ENCODE measurements at regions of chr7 and their contacts with region 1.

Region 1: DNA sequence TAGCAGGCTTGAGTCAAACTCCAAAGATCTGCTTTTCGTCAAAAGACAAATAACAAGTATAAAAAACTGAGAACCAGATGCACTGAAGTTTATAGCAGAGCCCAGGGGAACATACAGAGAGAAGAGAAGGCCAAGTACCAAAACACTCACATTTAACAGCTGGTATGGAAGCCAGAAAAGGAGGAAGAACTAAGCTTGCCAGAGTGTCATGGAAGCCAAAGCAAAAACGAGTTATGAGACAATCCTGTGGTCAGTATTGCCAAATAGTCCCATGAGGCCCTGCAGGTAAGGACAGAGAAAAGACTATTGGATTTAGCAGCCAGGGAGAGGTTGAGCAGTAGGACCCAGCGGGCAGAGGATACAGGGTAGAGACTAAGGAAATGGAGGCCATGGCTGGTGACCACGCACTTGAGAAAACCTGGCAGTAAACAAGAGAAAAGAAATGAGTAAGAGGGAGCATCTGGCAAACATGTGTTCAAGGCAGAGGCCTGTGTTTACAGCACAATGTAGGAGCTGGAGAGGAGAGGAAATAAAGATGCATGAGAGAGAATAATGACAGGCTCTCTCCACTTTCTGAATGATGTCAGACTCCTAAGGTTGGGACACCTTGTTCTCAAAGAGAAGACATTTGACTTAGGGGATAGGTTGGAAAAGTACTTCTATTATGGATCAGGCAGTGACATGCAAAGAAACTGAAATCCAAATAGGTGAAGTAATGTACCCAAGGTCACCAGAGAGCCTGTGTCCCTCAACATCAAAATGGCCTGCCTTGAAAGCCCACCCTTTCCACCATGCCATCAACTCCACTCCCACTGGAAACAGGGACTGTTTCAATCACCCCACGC is 9.1 kb downstream of the CREB3L2 start:
- DNase-seq: peak; percentile 58
- H3K4me3 ChIP-seq: no peak overlapping the region
- H3K27ac ChIP-seq: peak overlapping the region; percentile 80 to 99 (median 94)
- H3K4me1 ChIP-seq: peaks cover 30 to 87% (median 56%) of the 10 kb centered on the region in 4 donors
- H3K27me3 ChIP-seq: no peaks in the 10 kb centered on the region
- CTCF ChIP-seq: no peak
- EP300 ChIP-seq: peak; percentile 51
- POLR2A ChIP-seq: no peak

Region 2: GRCh38 chr7:137934941-137935883 is 57.6 kb before region 1 on chr7:
- in situ Hi-C with region 1: loop called in 1 of 4 experiments (anchors 10 kb)
- intact Hi-C with region 1: no loop called
- DNase-seq: no peak
- H3K4me3 ChIP-seq: peak overlapping the region in 3 of 4 donors; percentile 8 to 29 (median 8)
- H3K27ac ChIP-seq: peak overlapping the region; percentile 67 to 76 (median 74)
- H3K4me1 ChIP-seq: peaks cover 30 to 66% (median 56%) of the 10 kb centered on the region in 4 donors
- H3K27me3 ChIP-seq: no peaks in the 10 kb centered on the region
- CTCF ChIP-seq: no peak
- EP300 ChIP-seq: no peak
- POLR2A ChIP-seq: no peak

Region 3: DNA sequence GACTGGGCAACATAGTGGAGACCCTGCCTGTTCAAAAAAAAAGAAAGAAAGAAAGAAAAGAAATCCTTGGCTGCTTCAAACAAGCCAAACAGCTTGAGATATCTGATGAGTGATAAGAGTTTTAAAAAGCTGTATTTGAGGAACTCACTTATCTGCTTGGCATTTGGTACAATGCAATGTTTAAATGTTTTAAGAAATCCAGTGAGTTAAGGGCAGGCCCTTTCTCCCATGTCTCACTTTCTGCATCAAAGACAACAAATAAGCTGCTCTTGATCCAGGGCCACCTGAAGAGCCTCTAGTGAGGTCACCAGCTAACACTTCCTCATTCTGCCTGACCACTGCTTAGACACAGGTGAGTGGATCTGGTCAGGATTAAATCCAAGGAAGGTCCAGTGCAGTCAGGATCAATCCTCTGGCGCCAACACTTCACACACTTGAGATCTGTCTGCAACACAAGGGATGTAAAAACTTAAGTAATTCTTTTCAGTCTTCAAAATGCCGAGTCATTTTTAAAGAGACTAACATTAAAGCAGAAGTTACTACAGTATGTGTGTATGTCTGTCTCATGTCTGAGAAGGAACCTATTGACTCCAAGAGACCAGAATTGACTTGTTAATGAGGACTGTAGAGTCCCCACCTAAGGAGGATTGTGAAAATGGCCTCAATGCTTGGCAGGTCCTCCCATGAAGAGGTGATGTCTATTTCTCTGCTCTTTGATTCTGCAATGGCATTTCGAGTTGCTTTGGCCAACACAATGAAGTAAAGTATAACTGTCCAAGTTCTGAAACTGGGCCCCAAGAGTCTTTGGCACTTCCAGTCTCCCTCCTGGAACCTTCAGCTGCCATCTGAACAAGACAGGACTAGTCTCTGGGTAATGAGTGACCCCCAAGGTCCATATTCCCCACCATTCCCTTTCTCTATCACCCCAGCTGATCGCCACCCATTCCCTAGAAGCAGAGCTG is 34.0 kb before region 1 on chr7:
- in situ Hi-C with region 1: no loop called
- intact Hi-C with region 1: loop called (anchors 5 kb)
- DNase-seq: no peak
- H3K4me3 ChIP-seq: no peak overlapping the region
- H3K27ac ChIP-seq: peak overlapping the region; percentile 15 to 89 (median 82)
- H3K4me1 ChIP-seq: peaks cover 14 to 31% (median 22%) of the 10 kb centered on the region in 4 donors
- H3K27me3 ChIP-seq: no peaks in the 10 kb centered on the region
- CTCF ChIP-seq: no peak
- EP300 ChIP-seq: no peak
- POLR2A ChIP-seq: no peak